ENCODE measurements at regions of chr11 and their contacts with region 1.

Region 1: GRCh38 chr11:61091373-61092279 is 10.7 kb upstream of the CD5 start:
- DNase-seq: peak; percentile 79
- ATAC-seq: peak; percentile 68
- H3K4me3 Mint-ChIP-seq: peak overlapping the region; percentile 91
- H3K27ac Mint-ChIP-seq: peak overlapping the region; percentile 99
- H3K4me1 Mint-ChIP-seq: peaks cover 67% of the 10 kb centered on the region
- H3K27me3 Mint-ChIP-seq: no peaks in the 10 kb centered on the region
- CTCF ChIP-seq: no peak

Region 2: GRCh38 chr11:61028272-61028761 is 63.3 kb before region 1 on chr11:
- CTCF ChIA-PET with region 1: no interaction called
- POLR2A ChIA-PET with region 1: interaction called, 18 read pairs
- intact Hi-C with region 1: no loop called
- DNase-seq: peak; percentile 88
- ATAC-seq: peak; percentile 31
- H3K4me3 Mint-ChIP-seq: peak overlapping the region; percentile 79
- H3K27ac Mint-ChIP-seq: peak overlapping the region; percentile 96
- H3K4me1 Mint-ChIP-seq: peaks cover 75% of the 10 kb centered on the region
- H3K27me3 Mint-ChIP-seq: no peaks in the 10 kb centered on the region
- CTCF ChIP-seq: no peak

Region 3: DNA sequence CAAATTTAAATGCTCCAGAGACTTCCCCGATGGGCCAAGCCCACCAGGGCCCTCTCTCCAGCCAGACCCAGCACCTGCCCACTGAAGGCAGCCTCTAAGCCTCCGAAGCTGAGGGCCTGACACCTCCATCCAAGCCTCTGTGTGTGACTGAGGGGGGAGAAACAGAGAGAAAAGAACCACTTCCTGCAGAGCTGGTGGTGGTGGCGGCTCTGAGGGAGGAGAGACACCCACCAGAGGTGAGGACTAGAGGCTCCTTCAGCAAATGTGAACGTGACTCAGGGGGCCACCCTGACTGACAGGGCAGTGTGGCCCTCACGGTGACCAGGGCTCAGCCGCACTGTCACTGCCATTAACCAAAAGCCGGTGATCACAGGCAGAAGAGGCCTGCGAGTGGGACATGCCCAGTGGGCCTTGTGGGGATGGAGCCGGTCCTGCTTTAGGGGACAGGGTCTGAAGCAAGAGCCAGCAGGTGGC is 20.4 kb before region 1 on chr11:
- CTCF ChIA-PET with region 1: interaction called, 3 read pairs
- POLR2A ChIA-PET with region 1: interaction called, 42 read pairs
- intact Hi-C with region 1: no loop called
- DNase-seq: peak; percentile 87
- ATAC-seq: peak; percentile 95
- H3K4me3 Mint-ChIP-seq: peak overlapping the region; percentile 47
- H3K27ac Mint-ChIP-seq: peak overlapping the region; percentile 93
- H3K4me1 Mint-ChIP-seq: peaks cover 87% of the 10 kb centered on the region
- H3K27me3 Mint-ChIP-seq: no peaks in the 10 kb centered on the region
- CTCF ChIP-seq: no peak

Region 4: DNA sequence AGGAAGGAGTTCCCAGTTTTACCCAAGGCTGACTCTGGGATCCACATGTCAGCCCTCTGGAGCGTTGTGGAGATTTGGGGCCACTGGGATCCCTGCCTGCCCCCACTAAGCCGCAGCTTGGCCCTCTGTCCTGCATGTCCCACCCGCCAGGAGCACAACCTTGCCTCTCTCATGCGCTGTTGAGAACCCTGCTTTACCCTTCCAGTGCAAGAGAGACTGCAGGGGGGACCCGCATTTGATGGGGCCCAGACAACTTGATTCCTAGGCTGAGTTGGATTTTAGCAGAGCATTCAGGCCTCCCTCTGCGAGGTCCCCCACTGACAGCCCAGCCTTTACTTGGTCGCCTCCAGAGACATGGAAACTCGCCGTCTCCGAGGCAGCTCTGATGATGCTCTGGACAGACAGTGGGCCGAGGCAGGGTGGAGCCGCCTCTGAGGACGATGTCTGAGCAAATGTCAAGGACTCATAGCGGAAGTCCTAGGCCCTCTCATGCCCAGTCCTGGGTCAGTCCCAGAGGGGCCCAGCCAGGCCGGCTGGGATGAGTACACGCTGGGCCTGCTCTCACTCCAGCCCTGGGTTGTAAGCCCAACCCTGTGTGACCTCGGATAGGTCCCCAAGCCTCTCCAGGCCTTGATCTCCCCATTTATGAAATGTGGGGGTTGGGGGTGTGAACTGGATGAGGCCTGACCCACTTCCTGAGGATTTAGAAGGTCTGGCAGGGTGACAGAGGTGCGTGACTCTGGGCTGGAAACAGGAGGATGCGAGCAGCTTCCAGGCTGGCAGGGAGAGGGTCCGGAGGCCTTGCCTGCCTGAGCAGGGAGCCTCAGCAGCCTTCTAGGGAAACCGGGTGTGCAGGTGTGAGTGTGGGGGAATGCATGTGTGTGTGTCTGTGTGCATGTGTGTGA is 11.3 kb after region 1 on chr11:
- CTCF ChIA-PET with region 1: no interaction called
- POLR2A ChIA-PET with region 1: interaction called, 17 read pairs
- intact Hi-C with region 1: no loop called
- DNase-seq: peak; percentile 56
- ATAC-seq: peak; percentile 37
- H3K4me3 Mint-ChIP-seq: no peak overlapping the region
- H3K27ac Mint-ChIP-seq: no peak overlapping the region
- H3K4me1 Mint-ChIP-seq: peaks cover 32% of the 10 kb centered on the region
- H3K27me3 Mint-ChIP-seq: no peaks in the 10 kb centered on the region
- CTCF ChIP-seq: no peak